ENCODE measurements at regions of chr19 and their contacts with region 1.

Region 1: GRCh38 chr19:14147797-14148605 is 11.6 kb upstream of the ASF1B start:
- DNase-seq: peak in 7 of 9 donors; percentile 23 to 51 (median 38)
- ATAC-seq: peak; percentile 79
- H3K4me3 ChIP-seq: no peak overlapping the region
- H3K4me3 Mint-ChIP-seq: peak overlapping the region in 9 of 10 donors; percentile 57 to 95 (median 82)
- H3K27ac ChIP-seq: peak overlapping the region; percentile 91
- H3K27ac Mint-ChIP-seq: peak overlapping the region; percentile 92 to 99 (median 99)
- H3K4me1 ChIP-seq: peaks cover 23 to 30% of the 10 kb centered on the region in 2 donors
- H3K4me1 Mint-ChIP-seq: peaks cover 13 to 67% (median 44%) of the 10 kb centered on the region in 7 donors
- H3K27me3 ChIP-seq: no peaks in the 10 kb centered on the region
- H3K27me3 Mint-ChIP-seq: no peaks in the 10 kb centered on the region

Region 2: GRCh38 chr19:14081325-14082093 is 66.5 kb before region 1 on chr19:
- CTCF ChIA-PET with region 1: no interaction called
- POLR2A ChIA-PET with region 1: no interaction called
- intact Hi-C with region 1: no loop called
- DNase-seq: peak; percentile 96 to 100 (median 99)
- ATAC-seq: peak; percentile 97
- H3K4me3 ChIP-seq: peak overlapping the region; percentile 86
- H3K4me3 Mint-ChIP-seq: peak overlapping the region; percentile 80 to 98 (median 94)
- H3K27ac ChIP-seq: peak overlapping the region; percentile 80
- H3K27ac Mint-ChIP-seq: peak overlapping the region; percentile 86 to 98 (median 95)
- H3K4me1 ChIP-seq: peaks cover 5 to 15% of the 10 kb centered on the region in 2 donors
- H3K4me1 Mint-ChIP-seq: peaks cover 0 to 27% (median 17%) of the 10 kb centered on the region in 7 donors
- H3K27me3 ChIP-seq: no peaks in the 10 kb centered on the region
- H3K27me3 Mint-ChIP-seq: no peaks in the 10 kb centered on the region

Region 3: DNA sequence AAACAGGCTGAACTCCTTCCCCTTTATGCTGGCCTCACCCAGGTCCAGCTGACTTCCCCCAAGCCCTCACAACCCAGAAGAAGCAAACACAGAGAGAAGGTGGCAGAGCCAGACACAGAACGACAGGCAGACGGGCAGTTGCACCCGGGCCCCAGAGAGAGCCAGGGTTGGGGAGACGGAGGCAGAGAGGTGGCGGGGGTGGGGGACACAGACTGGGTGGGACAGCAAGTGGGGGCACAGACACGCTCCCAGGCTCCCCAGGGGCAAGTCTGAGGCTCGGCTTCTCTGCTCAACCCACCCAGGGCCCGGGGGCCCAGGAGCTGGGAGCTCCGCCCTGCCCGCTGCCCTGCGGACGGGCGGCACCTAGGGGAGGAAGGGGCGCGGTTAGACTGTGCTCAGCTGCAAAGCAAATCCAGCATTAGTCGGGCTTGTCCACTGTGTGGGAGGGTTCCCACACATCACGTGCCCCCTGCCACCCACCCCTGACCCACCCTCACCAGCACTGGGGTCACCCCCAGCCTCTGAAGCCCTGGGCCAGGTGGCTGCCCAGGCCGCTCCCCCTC is 19.7 kb after region 1 on chr19:
- CTCF ChIA-PET with region 1: interaction called, 4 read pairs
- POLR2A ChIA-PET with region 1: interaction called, 22 read pairs
- intact Hi-C with region 1: loop called (anchors 1 to 2 kb)
- DNase-seq: peak in 6 of 9 donors; percentile 15 to 49 (median 32)
- ATAC-seq: peak; percentile 80
- H3K4me3 ChIP-seq: peak overlapping the region; percentile 50
- H3K4me3 Mint-ChIP-seq: peak overlapping the region; percentile 75 to 97 (median 88)
- H3K27ac ChIP-seq: peak overlapping the region; percentile 68
- H3K27ac Mint-ChIP-seq: peak overlapping the region; percentile 77 to 97 (median 94)
- H3K4me1 ChIP-seq: peaks cover 11 to 15% of the 10 kb centered on the region in 2 donors
- H3K4me1 Mint-ChIP-seq: peaks cover 18 to 31% (median 26%) of the 10 kb centered on the region in 7 donors
- H3K27me3 ChIP-seq: no peaks in the 10 kb centered on the region
- H3K27me3 Mint-ChIP-seq: no peaks in the 10 kb centered on the region